ENCODE measurements at regions of chr7 and their contacts with region 1.

Region 1: DNA sequence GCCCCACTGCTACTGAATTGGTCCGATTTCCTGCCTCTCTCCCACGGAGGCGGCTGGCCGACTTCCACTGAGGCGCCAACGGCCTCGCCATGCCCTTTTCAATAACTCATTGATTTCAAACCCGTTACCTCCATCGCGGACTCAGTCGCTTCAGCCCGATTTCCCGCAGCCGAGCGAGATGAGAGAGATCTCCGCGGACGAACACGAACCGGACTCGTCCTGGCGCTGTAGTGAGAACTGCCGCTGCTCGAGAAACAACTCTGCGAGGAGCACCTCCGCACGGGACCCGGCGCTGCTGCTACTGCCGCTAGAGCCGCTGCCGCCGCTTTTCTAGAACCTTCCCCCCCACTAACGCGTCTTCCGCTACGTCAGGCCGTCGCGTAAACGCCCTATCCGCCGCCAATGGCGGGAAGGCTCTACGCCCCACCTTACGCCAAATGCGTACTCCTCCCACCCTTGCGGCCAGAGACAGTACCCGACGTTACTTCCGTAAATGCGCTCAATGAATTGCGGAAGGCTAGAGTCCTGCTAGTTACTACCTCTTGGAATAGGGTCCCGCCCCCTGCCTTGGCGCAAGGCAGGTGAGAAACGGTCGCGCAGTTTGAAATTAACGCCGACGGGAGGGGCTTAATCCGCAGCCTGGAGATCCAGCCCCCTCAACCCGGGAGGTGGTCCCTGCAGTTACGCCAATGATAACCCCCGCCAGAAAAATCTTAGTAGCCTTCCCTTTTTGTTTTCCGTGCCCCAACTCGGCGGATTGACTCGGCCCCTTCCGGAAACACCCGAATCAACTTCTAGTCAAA is at the start of gene HNRNPA2B1:
- DNase-seq: peak; percentile 98 to 100 (median 99)
- H3K4me3 ChIP-seq: peak within 1 kb of the TSS; percentile 80 to 89
- H3K4me3 Mint-ChIP-seq: peak within 1 kb of the TSS; percentile 99 to 100 (median 100)
- H3K27ac ChIP-seq: peak within 1 kb of the TSS; percentile 98
- H3K27ac Mint-ChIP-seq: peak within 1 kb of the TSS; percentile 99 to 100 (median 100)
- H3K4me1 ChIP-seq: peaks cover 56% of the 10 kb centered on the region
- H3K4me1 Mint-ChIP-seq: peaks cover 38 to 76% (median 46%) of the 10 kb centered on the region in 4 donors
- H3K27me3 ChIP-seq: no peaks in the 10 kb centered on the region
- H3K27me3 Mint-ChIP-seq: peaks cover 0 to 4% of the 10 kb centered on the region in 2 donors
- total RNA-seq, gene HNRNPA2B1: 450 to 466 TPM

Region 2: GRCh38 chr7:24202150-24202549 is 1998.5 kb before region 1 on chr7:
- CTCF ChIA-PET with region 1: no interaction called
- POLR2A ChIA-PET with region 1: no interaction called
- intact Hi-C with region 1: no loop called
- DNase-seq: no peak
- H3K4me3 ChIP-seq: no peak overlapping the region
- H3K4me3 Mint-ChIP-seq: no peak overlapping the region
- H3K27ac ChIP-seq: no peak overlapping the region
- H3K27ac Mint-ChIP-seq: no peak overlapping the region
- H3K4me1 ChIP-seq: peaks cover 15% of the 10 kb centered on the region
- H3K4me1 Mint-ChIP-seq: peaks cover 9 to 32% (median 16%) of the 10 kb centered on the region in 4 donors
- H3K27me3 ChIP-seq: no peaks in the 10 kb centered on the region
- H3K27me3 Mint-ChIP-seq: peaks cover 0 to 3% of the 10 kb centered on the region in 2 donors

Region 3: GRCh38 chr7:26101361-26102151 is 99.1 kb before region 1 on chr7:
- CTCF ChIA-PET with region 1: interaction called, 6 read pairs
- POLR2A ChIA-PET with region 1: interaction called, 14 read pairs
- intact Hi-C with region 1: no loop called
- DNase-seq: no peak
- H3K4me3 ChIP-seq: no peak overlapping the region
- H3K4me3 Mint-ChIP-seq: peak overlapping the region in 7 of 8 donors; percentile 16 to 67 (median 46)
- H3K27ac ChIP-seq: no peak overlapping the region
- H3K27ac Mint-ChIP-seq: peak overlapping the region in 3 of 7 donors; percentile 28 to 57 (median 48)
- H3K4me1 ChIP-seq: peaks cover 38% of the 10 kb centered on the region
- H3K4me1 Mint-ChIP-seq: peaks cover 9 to 45% (median 27%) of the 10 kb centered on the region in 4 donors
- H3K27me3 ChIP-seq: no peaks in the 10 kb centered on the region
- H3K27me3 Mint-ChIP-seq: no peaks in the 10 kb centered on the region

Region 4: GRCh38 chr7:26167301-26167934 is 33.2 kb before region 1 on chr7:
- CTCF ChIA-PET with region 1: interaction called, 8 read pairs
- POLR2A ChIA-PET with region 1: interaction called, 169 read pairs
- intact Hi-C with region 1: no loop called
- DNase-seq: peak in 2 of 5 donors; percentile 33 to 70
- H3K4me3 ChIP-seq: no peak overlapping the region
- H3K4me3 Mint-ChIP-seq: peak overlapping the region in 6 of 8 donors; percentile 11 to 70 (median 40)
- H3K27ac ChIP-seq: peak overlapping the region; percentile 39
- H3K27ac Mint-ChIP-seq: peak overlapping the region; percentile 44 to 94 (median 85)
- H3K4me1 ChIP-seq: peaks cover 20% of the 10 kb centered on the region
- H3K4me1 Mint-ChIP-seq: peaks cover 14 to 29% (median 23%) of the 10 kb centered on the region in 4 donors
- H3K27me3 ChIP-seq: no peaks in the 10 kb centered on the region
- H3K27me3 Mint-ChIP-seq: no peaks in the 10 kb centered on the region

Region 5: DNA sequence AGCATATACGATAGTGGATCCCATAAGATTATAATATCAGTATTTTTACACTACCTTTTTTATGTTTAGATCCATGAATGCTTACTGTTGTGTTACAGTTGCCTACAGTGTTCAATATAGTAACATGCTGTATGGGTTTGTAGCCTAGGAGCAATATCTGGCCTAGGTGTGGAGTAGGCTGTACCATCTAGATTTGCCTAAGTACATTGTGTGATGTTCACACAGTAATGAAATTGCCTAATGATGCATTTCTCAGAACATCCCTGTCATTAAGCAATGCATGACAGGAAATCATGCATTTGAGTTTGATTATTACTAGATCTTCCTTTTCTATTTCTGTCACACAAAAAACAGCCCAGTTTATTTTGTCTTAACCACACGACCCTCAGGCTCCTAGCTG is 15.4 kb after region 1 on chr7:
- CTCF ChIA-PET with region 1: interaction called, 4 read pairs
- POLR2A ChIA-PET with region 1: interaction called, 12 read pairs
- intact Hi-C with region 1: no loop called
- DNase-seq: no peak
- H3K4me3 ChIP-seq: no peak overlapping the region
- H3K4me3 Mint-ChIP-seq: no peak overlapping the region
- H3K27ac ChIP-seq: no peak overlapping the region
- H3K27ac Mint-ChIP-seq: peak overlapping the region in 1 of 7 donors; percentile 1
- H3K4me1 ChIP-seq: no peaks in the 10 kb centered on the region
- H3K4me1 Mint-ChIP-seq: peaks cover 0 to 9% (median 6%) of the 10 kb centered on the region in 4 donors
- H3K27me3 ChIP-seq: no peaks in the 10 kb centered on the region
- H3K27me3 Mint-ChIP-seq: no peaks in the 10 kb centered on the region

Region 6: DNA sequence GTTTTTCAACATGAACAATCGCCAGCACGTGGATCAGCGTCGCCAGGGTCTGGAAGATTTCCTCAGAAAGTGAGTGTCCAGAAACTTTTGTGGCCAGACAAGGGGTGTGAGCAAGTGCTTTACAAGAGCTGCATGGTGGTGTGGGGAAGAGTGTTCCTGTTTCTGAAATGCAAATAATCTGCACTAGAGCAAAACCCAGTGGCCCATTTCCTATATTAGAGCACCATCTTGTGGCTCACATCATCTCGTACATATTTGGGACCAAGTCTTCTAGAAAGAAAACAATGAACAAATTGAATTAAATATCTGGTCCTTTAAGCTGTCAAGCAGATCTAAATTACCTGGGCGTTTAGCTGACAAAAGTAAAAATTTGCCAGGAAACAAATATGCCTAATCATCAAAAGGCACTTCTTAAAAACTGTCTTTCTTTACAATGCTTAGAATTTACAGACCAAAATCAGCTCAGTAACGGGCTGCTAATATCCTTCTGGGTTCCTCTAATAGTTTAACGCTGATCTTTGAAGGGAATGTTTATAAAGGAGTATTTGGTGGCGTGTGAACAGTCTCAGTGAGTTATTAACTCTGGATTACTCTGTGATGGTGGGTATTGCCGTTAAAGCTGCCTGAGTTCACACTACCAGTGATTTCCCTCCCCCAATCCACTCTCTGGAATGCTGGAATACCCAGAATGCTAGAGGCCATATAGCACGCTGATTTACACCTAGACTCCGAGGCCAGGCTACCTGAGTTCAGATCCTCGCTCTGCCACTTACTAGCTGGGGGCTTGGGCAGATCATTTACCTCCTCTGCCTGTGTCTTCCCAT is 164.6 kb after region 1 on chr7:
- CTCF ChIA-PET with region 1: interaction called, 12 read pairs
- POLR2A ChIA-PET with region 1: interaction called, 7 read pairs
- intact Hi-C with region 1: loop called (anchors 1 kb)
- DNase-seq: peak; percentile 60 to 67 (median 64)
- H3K4me3 ChIP-seq: no peak overlapping the region
- H3K4me3 Mint-ChIP-seq: no peak overlapping the region
- H3K27ac ChIP-seq: no peak overlapping the region
- H3K27ac Mint-ChIP-seq: peak overlapping the region in 2 of 7 donors; percentile 60 to 65
- H3K4me1 ChIP-seq: peaks cover 8% of the 10 kb centered on the region
- H3K4me1 Mint-ChIP-seq: peaks cover 2 to 8% (median 6%) of the 10 kb centered on the region in 4 donors
- H3K27me3 ChIP-seq: no peaks in the 10 kb centered on the region
- H3K27me3 Mint-ChIP-seq: peaks cover 0 to 2% of the 10 kb centered on the region in 2 donors